ENCODE measurements at regions of chr11 and their contacts with region 1.

Region 1: DNA sequence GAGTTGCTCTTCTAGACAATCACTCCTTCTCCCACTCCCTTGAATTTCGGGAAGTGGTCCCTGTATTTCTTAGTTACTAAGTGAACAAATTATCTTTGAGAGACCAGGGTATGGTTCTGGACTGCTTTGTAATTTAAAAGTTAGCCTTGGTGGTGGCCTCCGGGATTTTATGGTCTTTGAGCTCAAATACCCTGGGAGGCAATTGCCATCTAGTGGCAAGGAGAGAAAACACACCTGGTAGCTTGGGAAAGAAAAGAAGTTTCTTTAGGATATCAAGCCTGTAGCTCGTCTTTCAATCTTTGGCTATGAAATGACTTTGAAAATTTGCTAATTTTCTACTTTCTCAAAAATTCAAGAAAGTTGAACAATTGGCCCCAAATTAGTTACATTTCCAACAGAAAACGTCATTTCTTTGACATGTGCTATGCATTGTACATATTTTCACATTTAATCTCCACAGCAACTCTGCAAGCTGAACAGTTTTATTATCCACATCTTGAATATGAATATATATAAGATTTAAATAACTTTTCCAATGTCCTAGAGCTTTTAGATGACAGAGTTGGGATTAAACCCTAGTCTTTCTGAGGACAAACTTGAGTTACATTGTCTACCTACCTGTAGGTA is 39.1 kb downstream of the MMP27 start:
- DNase-seq: peak; percentile 28
- H3K4me3 Mint-ChIP-seq: no peak overlapping the region
- H3K27ac Mint-ChIP-seq: no peak overlapping the region
- H3K4me1 Mint-ChIP-seq: no peaks in the 10 kb centered on the region
- H3K27me3 Mint-ChIP-seq: no peaks in the 10 kb centered on the region

Region 2: GRCh38 chr11:102367364-102367763 is 299.1 kb before region 1 on chr11:
- CTCF ChIA-PET with region 1: interaction called, 5 read pairs
- intact Hi-C with region 1: loop called (anchors 1 kb)
- DNase-seq: no peak
- H3K4me3 Mint-ChIP-seq: no peak overlapping the region
- H3K27ac Mint-ChIP-seq: peak overlapping the region; percentile 1
- H3K4me1 Mint-ChIP-seq: peaks cover 34% of the 10 kb centered on the region
- H3K27me3 Mint-ChIP-seq: no peaks in the 10 kb centered on the region

Region 3: GRCh38 chr11:102513869-102514268 is 152.6 kb before region 1 on chr11:
- CTCF ChIA-PET with region 1: interaction called, 7 read pairs
- intact Hi-C with region 1: loop called (anchors 5 kb)
- DNase-seq: no peak
- H3K4me3 Mint-ChIP-seq: no peak overlapping the region
- H3K27ac Mint-ChIP-seq: no peak overlapping the region
- H3K4me1 Mint-ChIP-seq: no peaks in the 10 kb centered on the region
- H3K27me3 Mint-ChIP-seq: no peaks in the 10 kb centered on the region

Region 4: DNA sequence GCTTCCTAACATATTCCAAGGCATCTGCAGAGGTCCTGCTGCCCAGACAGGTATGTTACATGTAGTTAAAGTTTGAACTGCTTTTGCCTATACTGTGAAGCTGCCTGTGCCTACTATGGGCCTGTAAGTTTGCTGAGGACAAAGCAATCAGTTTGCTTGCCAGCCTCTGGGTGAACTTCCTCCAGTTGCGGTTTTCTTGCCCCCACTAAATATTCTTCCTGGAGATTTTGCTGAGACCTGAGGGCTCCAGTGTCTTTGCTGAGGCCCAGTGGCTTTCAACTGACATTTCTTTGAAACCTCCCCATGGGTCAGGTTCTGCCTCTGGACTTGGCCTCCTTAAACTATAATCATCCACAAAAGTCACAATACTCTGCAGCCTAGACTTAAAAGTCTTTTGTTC is 11.7 kb before region 1 on chr11:
- CTCF ChIA-PET with region 1: interaction called, 10 read pairs
- intact Hi-C with region 1: no loop called
- DNase-seq: no peak
- H3K4me3 Mint-ChIP-seq: no peak overlapping the region
- H3K27ac Mint-ChIP-seq: no peak overlapping the region
- H3K4me1 Mint-ChIP-seq: no peaks in the 10 kb centered on the region
- H3K27me3 Mint-ChIP-seq: peaks cover 9% of the 10 kb centered on the region

Region 5: GRCh38 chr11:102678022-102678421 is 11.6 kb after region 1 on chr11:
- CTCF ChIA-PET with region 1: interaction called, 12 read pairs
- intact Hi-C with region 1: no loop called
- DNase-seq: no peak
- H3K4me3 Mint-ChIP-seq: no peak overlapping the region
- H3K27ac Mint-ChIP-seq: no peak overlapping the region
- H3K4me1 Mint-ChIP-seq: no peaks in the 10 kb centered on the region
- H3K27me3 Mint-ChIP-seq: peaks cover 13% of the 10 kb centered on the region

Region 6: DNA sequence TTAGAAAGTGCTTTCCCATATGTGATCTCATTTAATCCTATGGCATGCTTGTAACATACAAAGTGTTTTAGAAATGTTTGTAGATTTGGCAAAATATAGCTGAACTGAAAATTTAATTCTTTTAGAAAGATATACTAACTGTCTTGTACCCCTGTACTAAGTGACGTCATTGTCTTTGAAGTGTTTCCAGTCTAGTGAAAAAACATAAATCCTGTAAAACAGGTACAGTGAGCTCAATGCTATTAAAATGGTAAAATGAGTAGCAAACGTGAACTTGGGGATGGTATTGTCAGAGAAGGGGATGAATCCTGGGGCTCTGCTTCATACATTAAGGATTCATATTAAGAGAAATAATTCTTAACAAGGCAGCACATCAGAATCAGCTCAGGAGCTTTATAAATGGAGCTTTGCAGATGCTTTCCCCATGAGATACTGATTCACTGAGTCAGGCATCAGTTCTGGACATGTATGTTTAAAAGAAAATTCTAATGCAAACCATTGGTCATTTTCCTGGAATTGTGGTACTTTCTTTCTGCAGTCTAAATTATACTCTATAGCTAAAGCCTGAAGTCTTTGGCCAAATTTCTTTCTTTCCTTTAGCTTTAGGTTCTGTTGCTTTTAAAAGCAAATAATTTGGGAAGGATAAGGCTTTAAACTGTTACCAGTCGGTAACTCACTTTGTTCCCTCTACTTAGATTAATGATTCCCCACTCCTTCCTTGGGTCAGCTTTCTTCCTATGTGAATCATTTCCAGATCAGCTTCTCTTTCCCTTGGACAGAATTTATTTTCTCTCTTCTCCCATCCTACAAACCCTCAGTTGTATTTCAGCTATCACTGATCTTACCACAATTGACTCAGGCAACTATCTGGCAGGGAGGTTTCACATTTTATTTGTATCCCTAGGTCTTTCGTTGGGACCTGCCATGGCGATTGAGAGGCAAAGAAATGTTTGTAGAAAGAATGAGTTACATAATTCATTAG is 1312.5 kb after region 1 on chr11:
- CTCF ChIA-PET with region 1: no interaction called
- intact Hi-C with region 1: no loop called
- DNase-seq: no peak
- H3K4me3 Mint-ChIP-seq: no peak overlapping the region
- H3K27ac Mint-ChIP-seq: no peak overlapping the region
- H3K4me1 Mint-ChIP-seq: no peaks in the 10 kb centered on the region
- H3K27me3 Mint-ChIP-seq: no peaks in the 10 kb centered on the region

Measured in activated naive CD4-positive, alpha-beta T cell treated with anti-CD3 and anti-CD28 coated beads for 36 hours (primary cell).